CD4-positive, alpha-beta memory T cell (primary cell): ENCODE measurements at regions of chr6 and their contacts with region 1.

Region 1: DNA sequence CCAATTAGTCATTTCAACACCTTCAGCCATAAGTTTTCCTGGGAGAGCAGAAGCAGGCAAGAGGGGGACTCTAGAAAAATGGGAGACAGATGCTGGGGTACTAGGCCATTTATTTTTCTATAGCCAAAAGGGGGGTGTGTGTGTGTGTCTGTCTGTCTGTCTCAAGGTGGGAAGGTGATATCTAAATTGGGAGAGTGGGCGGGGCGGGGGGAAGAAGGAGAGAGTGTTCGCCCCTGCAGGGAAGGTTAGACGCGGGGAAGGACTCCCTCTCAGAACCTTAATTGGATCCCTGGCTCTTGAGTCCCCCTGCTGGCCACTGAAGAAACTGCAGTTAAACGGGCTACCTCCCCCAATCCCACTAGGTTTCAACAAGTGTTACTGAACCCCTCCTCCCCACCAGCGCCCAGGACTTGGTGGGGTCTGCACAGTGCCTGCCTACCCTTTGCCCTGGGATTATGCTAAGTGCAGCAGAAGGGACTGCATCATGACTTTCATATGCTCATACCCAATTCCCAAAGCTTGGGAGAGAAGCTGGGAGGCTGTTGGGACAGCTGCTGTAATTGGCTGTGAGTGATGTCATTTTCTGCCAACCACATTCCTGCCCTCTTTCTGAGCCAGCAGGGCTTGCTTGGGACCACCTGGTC is 45.8 kb downstream of the FOXP4 start:
- DNase-seq: peak; percentile 60 to 75 (median 69)
- H3K4me3 ChIP-seq: no peak overlapping the region
- H3K4me3 Mint-ChIP-seq: no peak overlapping the region
- H3K27ac ChIP-seq: no peak overlapping the region
- H3K27ac Mint-ChIP-seq: peak overlapping the region in 1 of 7 donors; percentile 74
- H3K4me1 ChIP-seq: no peaks in the 10 kb centered on the region
- H3K4me1 Mint-ChIP-seq: peaks cover 0 to 7% (median 2%) of the 10 kb centered on the region in 4 donors
- H3K27me3 ChIP-seq: no peaks in the 10 kb centered on the region
- H3K27me3 Mint-ChIP-seq: no peaks in the 10 kb centered on the region

Region 2: GRCh38 chr6:41367700-41368099 is 224.3 kb before region 1 on chr6:
- CTCF ChIA-PET with region 1: interaction called, 39 read pairs
- POLR2A ChIA-PET with region 1: no interaction called
- intact Hi-C with region 1: loop called (anchors 1 kb)
- DNase-seq: no peak
- H3K4me3 ChIP-seq: no peak overlapping the region
- H3K4me3 Mint-ChIP-seq: no peak overlapping the region
- H3K27ac ChIP-seq: no peak overlapping the region
- H3K27ac Mint-ChIP-seq: peak overlapping the region in 1 of 7 donors; percentile 8
- H3K4me1 ChIP-seq: peaks cover 19% of the 10 kb centered on the region
- H3K4me1 Mint-ChIP-seq: peaks cover 17 to 27% (median 21%) of the 10 kb centered on the region in 4 donors
- H3K27me3 ChIP-seq: peaks cover 29% of the 10 kb centered on the region
- H3K27me3 Mint-ChIP-seq: peaks cover 38 to 42% of the 10 kb centered on the region in 2 donors

Region 3: GRCh38 chr6:41463062-41463930 is 128.7 kb before region 1 on chr6:
- CTCF ChIA-PET with region 1: interaction called, 20 read pairs
- POLR2A ChIA-PET with region 1: no interaction called
- intact Hi-C with region 1: loop called (anchors 1 kb)
- DNase-seq: no peak
- H3K4me3 ChIP-seq: no peak overlapping the region
- H3K4me3 Mint-ChIP-seq: no peak overlapping the region
- H3K27ac ChIP-seq: no peak overlapping the region
- H3K27ac Mint-ChIP-seq: peak overlapping the region in 1 of 7 donors; percentile 27
- H3K4me1 ChIP-seq: no peaks in the 10 kb centered on the region
- H3K4me1 Mint-ChIP-seq: peaks cover 0 to 3% (median 0%) of the 10 kb centered on the region in 4 donors
- H3K27me3 ChIP-seq: peaks cover 2% of the 10 kb centered on the region
- H3K27me3 Mint-ChIP-seq: peaks cover 25 to 44% of the 10 kb centered on the region in 2 donors

Region 4: GRCh38 chr6:41545703-41546474 is 46.1 kb before region 1 on chr6 and contains the start of gene FOXP4:
- CTCF ChIA-PET with region 1: no interaction called
- POLR2A ChIA-PET with region 1: no interaction called
- intact Hi-C with region 1: loop called (anchors 5 kb)
- DNase-seq: peak; percentile 80 to 87 (median 81)
- H3K4me3 ChIP-seq: peak within 1 kb of the TSS; percentile 75 to 76
- H3K4me3 Mint-ChIP-seq: peak within 1 kb of the TSS; percentile 90 to 96 (median 92)
- H3K27ac ChIP-seq: no peak within 1 kb of the TSS
- H3K27ac Mint-ChIP-seq: peak within 1 kb of the TSS; percentile 33 to 92 (median 72)
- H3K4me1 ChIP-seq: peaks cover 37% of the 10 kb centered on the region
- H3K4me1 Mint-ChIP-seq: peaks cover 11 to 42% (median 29%) of the 10 kb centered on the region in 4 donors
- H3K27me3 ChIP-seq: peaks cover 17% of the 10 kb centered on the region
- H3K27me3 Mint-ChIP-seq: peaks cover 0 to 2% of the 10 kb centered on the region in 2 donors
- total RNA-seq, gene FOXP4: 7.4 to 7.8 TPM